Naive thymus-derived CD4-positive, alpha-beta T cell (primary cell): ENCODE measurements at regions of chr20 and their contacts with region 1.

Region 1: GRCh38 chr20:46349035-46349741 is 40.9 kb upstream of the CDH22 start:
- DNase-seq: peak in 7 of 9 donors; percentile 30 to 57 (median 39)
- ATAC-seq: peak; percentile 68
- H3K4me3 ChIP-seq: no peak overlapping the region
- H3K4me3 Mint-ChIP-seq: no peak overlapping the region
- H3K27ac ChIP-seq: no peak overlapping the region
- H3K27ac Mint-ChIP-seq: peak overlapping the region in 5 of 9 donors; percentile 23 to 80 (median 40)
- H3K4me1 ChIP-seq: no peaks in the 10 kb centered on the region
- H3K4me1 Mint-ChIP-seq: peaks cover 19 to 33% (median 27%) of the 10 kb centered on the region in 7 donors
- H3K27me3 ChIP-seq: no peaks in the 10 kb centered on the region
- H3K27me3 Mint-ChIP-seq: peaks cover 0 to 8% (median 0%) of the 10 kb centered on the region in 5 donors

Region 2: DNA sequence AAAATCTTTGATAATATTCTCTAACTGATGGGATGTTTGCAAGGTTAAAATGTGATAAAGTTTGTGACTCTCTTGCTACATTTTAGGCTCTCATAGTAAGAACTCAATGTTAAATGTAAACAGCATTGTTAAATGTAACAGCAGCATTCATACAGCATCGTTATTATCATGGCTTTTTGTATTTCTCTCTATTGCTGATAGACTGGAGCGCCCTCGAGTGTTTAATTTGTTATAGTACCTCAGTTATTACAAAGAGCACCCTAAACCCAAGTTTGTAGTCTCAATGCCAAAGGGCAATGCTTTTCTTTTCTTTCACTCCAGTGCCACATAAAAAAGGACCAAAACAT is 1888.4 kb before region 1 on chr20:
- CTCF ChIA-PET with region 1: no interaction called
- POLR2A ChIA-PET with region 1: no interaction called
- intact Hi-C with region 1: no loop called
- DNase-seq: peak in 5 of 9 donors; percentile 16 to 31 (median 24)
- ATAC-seq: peak; percentile 34
- H3K4me3 ChIP-seq: no peak overlapping the region
- H3K4me3 Mint-ChIP-seq: no peak overlapping the region
- H3K27ac ChIP-seq: no peak overlapping the region
- H3K27ac Mint-ChIP-seq: peak overlapping the region in 1 of 9 donors; percentile 43
- H3K4me1 ChIP-seq: no peaks in the 10 kb centered on the region
- H3K4me1 Mint-ChIP-seq: no peaks in the 10 kb centered on the region
- H3K27me3 ChIP-seq: no peaks in the 10 kb centered on the region
- H3K27me3 Mint-ChIP-seq: peaks cover 0 to 5% (median 0%) of the 10 kb centered on the region in 5 donors

Region 3: GRCh38 chr20:46022411-46023147 is 326.6 kb before region 1 on chr20:
- CTCF ChIA-PET with region 1: no interaction called
- POLR2A ChIA-PET with region 1: no interaction called
- intact Hi-C with region 1: loop called in 1 of 2 experiments (anchors 5 kb)
- DNase-seq: peak; percentile 47 to 81 (median 69)
- ATAC-seq: peak; percentile 66
- H3K4me3 ChIP-seq: peak overlapping the region; percentile 25
- H3K4me3 Mint-ChIP-seq: peak overlapping the region; percentile 46 to 85 (median 76)
- H3K27ac ChIP-seq: no peak overlapping the region
- H3K27ac Mint-ChIP-seq: no peak overlapping the region
- H3K4me1 ChIP-seq: peaks cover 0 to 6% of the 10 kb centered on the region in 2 donors
- H3K4me1 Mint-ChIP-seq: peaks cover 12 to 25% (median 17%) of the 10 kb centered on the region in 7 donors
- H3K27me3 ChIP-seq: peaks cover 7 to 15% of the 10 kb centered on the region in 2 donors
- H3K27me3 Mint-ChIP-seq: peaks cover 42 to 63% (median 47%) of the 10 kb centered on the region in 5 donors

Region 4: DNA sequence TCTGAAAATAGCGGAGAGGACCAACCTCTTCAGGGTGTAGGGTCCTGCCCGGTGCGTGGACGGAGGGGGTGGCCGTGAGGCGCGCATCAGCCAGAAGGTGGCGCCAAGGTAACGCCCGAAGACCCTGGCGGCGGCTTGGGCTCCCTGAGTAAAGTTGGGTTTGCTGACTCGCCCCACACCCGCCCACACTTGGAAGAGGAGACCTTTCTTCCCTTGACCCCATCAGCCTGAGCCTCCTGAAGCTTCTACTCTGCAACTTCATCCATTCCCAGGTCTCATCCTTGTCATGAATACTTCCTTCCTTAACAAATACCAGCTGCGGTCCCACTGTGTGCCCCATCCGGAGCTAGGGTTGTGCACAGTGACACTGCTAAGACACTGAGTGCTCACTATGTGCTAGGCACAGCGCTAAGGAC is 216.5 kb before region 1 on chr20:
- CTCF ChIA-PET with region 1: no interaction called
- POLR2A ChIA-PET with region 1: no interaction called
- intact Hi-C with region 1: loop called in 1 of 2 experiments (anchors 10 kb)
- DNase-seq: peak in 7 of 9 donors; percentile 37 to 60 (median 47)
- ATAC-seq: peak; percentile 83
- H3K4me3 ChIP-seq: no peak overlapping the region
- H3K4me3 Mint-ChIP-seq: no peak overlapping the region
- H3K27ac ChIP-seq: no peak overlapping the region
- H3K27ac Mint-ChIP-seq: no peak overlapping the region
- H3K4me1 ChIP-seq: no peaks in the 10 kb centered on the region
- H3K4me1 Mint-ChIP-seq: peaks cover 0 to 6% (median 0%) of the 10 kb centered on the region in 7 donors
- H3K27me3 ChIP-seq: no peaks in the 10 kb centered on the region
- H3K27me3 Mint-ChIP-seq: peaks cover 27 to 47% (median 31%) of the 10 kb centered on the region in 5 donors

Region 5: GRCh38 chr20:46406199-46406985 is 57.2 kb after region 1 on chr20 and contains the start of gene ELMO2:
- CTCF ChIA-PET with region 1: interaction called, 12 read pairs
- POLR2A ChIA-PET with region 1: interaction called, 3 read pairs
- intact Hi-C with region 1: no loop called
- DNase-seq: peak; percentile 81 to 97 (median 94)
- ATAC-seq: peak; percentile 95
- H3K4me3 ChIP-seq: peak within 1 kb of the TSS; percentile 86
- H3K4me3 Mint-ChIP-seq: peak within 1 kb of the TSS; percentile 88 to 97 (median 95)
- H3K27ac ChIP-seq: peak within 1 kb of the TSS; percentile 97
- H3K27ac Mint-ChIP-seq: peak within 1 kb of the TSS; percentile 88 to 97 (median 93)
- H3K4me1 ChIP-seq: peaks cover 38 to 50% of the 10 kb centered on the region in 2 donors
- H3K4me1 Mint-ChIP-seq: peaks cover 44 to 78% (median 70%) of the 10 kb centered on the region in 7 donors
- H3K27me3 ChIP-seq: no peaks in the 10 kb centered on the region
- H3K27me3 Mint-ChIP-seq: peaks cover 0 to 3% (median 0%) of the 10 kb centered on the region in 5 donors
- total RNA-seq, gene ELMO2: 50.8 to 104 (median 52.3) TPM